Posterior vena cava (tissue), 2 donors: ENCODE measurements at regions of chr6 and their contacts with region 1.

Region 1: DNA sequence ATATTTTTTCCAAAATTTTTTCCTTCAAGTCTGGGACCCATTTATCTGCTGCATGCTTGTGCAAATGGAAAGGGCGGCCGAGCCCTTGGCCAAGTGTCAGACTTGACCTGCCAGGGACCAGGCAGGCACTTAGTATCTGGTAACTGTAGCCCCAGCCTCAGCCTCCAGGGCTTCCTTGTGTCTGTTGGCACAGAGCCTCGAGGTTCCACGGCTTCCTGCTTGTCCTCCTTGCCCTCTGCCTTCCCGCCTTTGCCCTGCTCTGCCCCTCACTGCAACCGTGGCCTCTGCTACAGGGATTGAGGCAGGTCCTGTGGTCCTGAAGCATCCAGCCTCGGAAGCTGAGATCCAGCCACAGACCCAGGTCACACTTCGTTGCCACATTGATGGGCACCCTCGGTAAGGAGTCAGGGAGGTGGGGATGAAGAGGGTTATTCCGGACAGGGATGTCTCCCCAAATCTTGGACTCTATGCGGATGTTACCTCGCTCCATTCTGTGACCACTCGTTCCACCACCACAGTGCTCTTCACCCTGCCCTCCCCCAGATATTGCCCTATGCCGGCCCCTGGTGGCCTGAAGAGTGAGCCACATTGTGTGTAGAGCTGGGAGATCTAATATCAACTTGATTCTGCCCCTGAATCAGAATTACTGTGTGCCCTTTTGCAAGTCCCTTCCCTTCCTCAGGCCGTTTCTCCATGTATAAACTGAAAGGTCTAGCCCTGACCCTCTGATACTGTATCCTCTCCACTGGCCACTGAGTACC is 41.5 kb upstream of the SRF start:
- DNase-seq: no peak

Region 2: DNA sequence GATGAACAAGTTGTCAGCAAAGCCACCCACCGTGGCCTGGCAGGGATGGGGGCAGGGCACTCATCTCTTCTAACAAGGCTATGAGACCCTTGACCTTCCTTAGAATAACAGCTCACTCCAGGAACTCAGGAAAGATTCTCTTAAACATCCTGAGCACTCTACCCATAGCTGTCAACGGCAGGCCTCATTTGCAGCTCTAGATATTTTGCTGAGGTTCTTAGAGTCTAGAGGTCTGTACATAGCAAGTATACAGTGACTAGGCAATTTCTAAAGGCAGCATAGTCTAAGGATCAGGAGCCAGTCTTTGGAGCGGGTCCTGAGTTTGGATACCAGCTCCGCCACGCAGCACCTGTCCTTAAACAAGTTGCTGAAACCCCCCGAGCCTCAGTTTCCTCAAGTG is 689.6 kb before region 1 on chr6:
- intact Hi-C with region 1: no loop called
- DNase-seq: no peak

Region 3: DNA sequence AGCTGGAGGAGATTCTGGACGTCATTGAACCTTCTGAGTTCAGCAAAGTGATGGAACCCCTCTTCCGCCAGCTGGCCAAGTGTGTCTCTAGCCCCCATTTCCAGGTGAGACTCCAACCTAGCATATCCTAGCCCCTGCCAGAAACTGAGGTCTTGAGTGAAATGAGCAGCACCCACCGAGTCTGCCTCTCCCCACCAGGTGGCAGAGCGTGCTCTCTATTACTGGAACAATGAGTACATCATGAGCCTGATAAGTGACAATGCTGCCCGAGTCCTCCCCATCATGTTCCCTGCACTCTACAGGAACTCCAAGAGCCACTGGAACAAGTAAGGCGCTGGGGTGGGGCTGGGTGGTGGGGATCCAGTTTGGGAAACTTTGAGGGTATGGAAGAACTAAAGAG is 120.5 kb before region 1 on chr6:
- intact Hi-C with region 1: loop called in 1 of 2 experiments (anchors 10 kb)
- DNase-seq: no peak

Region 4: GRCh38 chr6:43059168-43060033 is 70.2 kb before region 1 on chr6 and contains the starts of genes KLC4 and MRPL2:
- intact Hi-C with region 1: loop called in 1 of 2 experiments (anchors 10 kb)
- DNase-seq: peak; percentile 99
- total RNA-seq, gene KLC4: 15.1 TPM
- total RNA-seq, gene MRPL2: 30.7 to 34.4 TPM